OCI-LY7 (cell line): ENCODE measurements at regions of chr1 and their contacts with region 1.

Region 1: GRCh38 chr1:185044981-185045813 is at the start of gene RNF2:
- DNase-seq: peak; percentile 87
- H3K4me3 ChIP-seq: peak within 1 kb of the TSS; percentile 87
- H3K27ac ChIP-seq: no peak within 1 kb of the TSS
- H3K4me1 ChIP-seq: peaks cover 11% of the 10 kb centered on the region
- CTCF ChIP-seq: no peak
- total RNA-seq, gene RNF2: 17.5 and 17.8 TPM in 2 replicates

Region 2: GRCh38 chr1:184051485-184052193 is 993.6 kb before region 1 on chr1 and contains the start of gene TSEN15:
- CTCF ChIA-PET with region 1: no interaction called
- POLR2A ChIA-PET with region 1: interaction called, 3 read pairs
- intact Hi-C with region 1: loop called (anchors 10 kb)
- DNase-seq: peak; percentile 94
- H3K4me3 ChIP-seq: peak within 1 kb of the TSS; percentile 73
- H3K27ac ChIP-seq: peak within 1 kb of the TSS; percentile 80
- H3K4me1 ChIP-seq: peaks cover 15% of the 10 kb centered on the region
- CTCF ChIP-seq: no peak; the same call in 1 of the 2 replicates
- total RNA-seq, gene TSEN15: 39.8 and 42.5 TPM in 2 replicates

Region 3: DNA sequence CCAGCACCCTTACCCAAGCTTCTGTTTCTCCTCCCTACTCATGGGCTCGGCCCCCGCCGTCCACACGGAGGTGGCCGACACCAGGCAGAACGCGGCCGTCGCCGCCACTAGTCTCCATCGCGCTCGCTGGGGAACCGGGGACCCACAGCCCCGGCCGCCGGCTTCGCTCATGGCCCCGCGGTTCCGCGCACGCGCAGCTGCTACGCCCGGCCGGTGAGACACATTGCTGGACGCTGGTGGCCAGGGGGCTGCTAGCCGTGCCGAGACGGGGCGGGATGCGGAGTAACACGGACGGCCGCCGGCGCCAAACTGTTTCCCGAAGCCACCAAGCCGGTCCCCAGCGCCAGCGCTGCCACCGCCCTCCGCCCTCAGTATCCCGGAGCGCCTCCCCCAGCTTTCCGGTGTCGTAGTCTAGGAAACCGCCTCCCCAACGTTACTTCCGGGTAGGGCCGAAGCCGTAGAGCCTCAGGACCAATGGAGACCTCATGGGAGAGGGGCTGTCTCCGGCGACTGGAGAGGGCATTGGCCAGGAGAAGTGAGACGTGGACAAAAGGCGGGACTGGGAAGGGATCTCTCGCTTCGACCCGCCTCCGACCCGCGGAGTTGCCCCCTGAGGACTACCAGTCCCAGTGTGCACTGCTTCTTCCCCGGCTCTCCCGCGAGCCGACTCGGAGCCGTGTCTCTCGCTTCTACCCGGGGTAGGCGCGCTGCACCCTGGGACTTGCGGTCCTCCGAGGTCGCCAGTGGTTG is 290.5 kb before region 1 on chr1 and contains the start of gene EDEM3:
- CTCF ChIA-PET with region 1: no interaction called
- POLR2A ChIA-PET with region 1: interaction called, 7 read pairs
- intact Hi-C with region 1: loop called (anchors 5 kb)
- DNase-seq: peak; percentile 98
- H3K4me3 ChIP-seq: peak within 1 kb of the TSS; percentile 81
- H3K27ac ChIP-seq: peak within 1 kb of the TSS; percentile 43
- H3K4me1 ChIP-seq: peaks cover 23% of the 10 kb centered on the region
- CTCF ChIP-seq: no peak
- total RNA-seq, gene EDEM3: 15.7 and 19.5 TPM in 2 replicates

Region 4: GRCh38 chr1:184805667-184806295 is 239.4 kb before region 1 on chr1:
- CTCF ChIA-PET with region 1: interaction called, 5 read pairs
- POLR2A ChIA-PET with region 1: interaction called, 3 read pairs
- intact Hi-C with region 1: loop called (anchors 5 kb)
- DNase-seq: peak; percentile 71
- H3K4me3 ChIP-seq: no peak overlapping the region
- H3K27ac ChIP-seq: no peak overlapping the region
- H3K4me1 ChIP-seq: no peaks in the 10 kb centered on the region
- CTCF ChIP-seq: peak; percentile 90

Region 5: GRCh38 chr1:185062710-185063370 is 17.6 kb after region 1 on chr1:
- CTCF ChIA-PET with region 1: interaction called, 3 read pairs
- POLR2A ChIA-PET with region 1: interaction called, 10 read pairs
- intact Hi-C with region 1: no loop called
- DNase-seq: no peak
- H3K4me3 ChIP-seq: no peak overlapping the region
- H3K27ac ChIP-seq: no peak overlapping the region
- H3K4me1 ChIP-seq: peaks cover 5% of the 10 kb centered on the region
- CTCF ChIP-seq: no peak

Region 6: GRCh38 chr1:185156854-185157598 is 111.8 kb after region 1 on chr1 and contains the starts of genes SWT1 and TRMT1L:
- CTCF ChIA-PET with region 1: no interaction called
- POLR2A ChIA-PET with region 1: interaction called, 5 read pairs
- intact Hi-C with region 1: loop called (anchors 1 kb)
- DNase-seq: peak; percentile 97
- H3K4me3 ChIP-seq: peak within 1 kb of the TSS; percentile 89
- H3K27ac ChIP-seq: peak within 1 kb of the TSS; percentile 64
- H3K4me1 ChIP-seq: peaks cover 21% of the 10 kb centered on the region
- CTCF ChIP-seq: no peak
- total RNA-seq, gene SWT1: 2.1 and 2.3 TPM in 2 replicates
- total RNA-seq, gene TRMT1L: 10.8 and 15.0 TPM in 2 replicates

Region 7: GRCh38 chr1:185170291-185170848 is 125.2 kb after region 1 on chr1:
- CTCF ChIA-PET with region 1: interaction called, 5 read pairs
- POLR2A ChIA-PET with region 1: interaction called, 5 read pairs
- intact Hi-C with region 1: loop called (anchors 5 kb)
- DNase-seq: peak; percentile 77
- H3K4me3 ChIP-seq: no peak overlapping the region
- H3K27ac ChIP-seq: no peak overlapping the region
- H3K4me1 ChIP-seq: no peaks in the 10 kb centered on the region
- CTCF ChIP-seq: peak; percentile 100